ENCODE measurements at regions of chr7 and their contacts with region 1.

Region 1: GRCh38 chr7:151759591-151760042 is 117.3 kb downstream of the PRKAG2 start:
- DNase-seq: no peak
- H3K4me3 ChIP-seq: no peak overlapping the region
- H3K27ac ChIP-seq: no peak overlapping the region
- H3K4me1 ChIP-seq: peaks cover 40 to 52% (median 50%) of the 10 kb centered on the region in 4 donors
- H3K27me3 ChIP-seq: no peaks in the 10 kb centered on the region
- CTCF ChIP-seq: peak; percentile 79 to 90 (median 87)
- EP300 ChIP-seq: no peak
- POLR2A ChIP-seq: no peak

Region 2: GRCh38 chr7:151315038-151315655 is 444.5 kb before region 1 on chr7:
- intact Hi-C with region 1: loop called (anchors 5 kb)
- DNase-seq: peak; percentile 96
- H3K4me3 ChIP-seq: no peak overlapping the region
- H3K27ac ChIP-seq: no peak overlapping the region
- H3K4me1 ChIP-seq: peaks cover 3 to 16% (median 15%) of the 10 kb centered on the region in 4 donors
- H3K27me3 ChIP-seq: no peaks in the 10 kb centered on the region
- CTCF ChIP-seq: peak; percentile 82 to 84 (median 83)
- EP300 ChIP-seq: no peak
- POLR2A ChIP-seq: no peak

Region 3: GRCh38 chr7:151368136-151368571 is 391.5 kb before region 1 on chr7:
- intact Hi-C with region 1: loop called (anchors 5 kb)
- DNase-seq: peak; percentile 96
- H3K4me3 ChIP-seq: no peak overlapping the region
- H3K27ac ChIP-seq: peak overlapping the region; percentile 71 to 85 (median 78)
- H3K4me1 ChIP-seq: peaks cover 12 to 34% (median 33%) of the 10 kb centered on the region in 4 donors
- H3K27me3 ChIP-seq: no peaks in the 10 kb centered on the region
- CTCF ChIP-seq: peak; percentile 94 to 100 (median 97)
- EP300 ChIP-seq: no peak
- POLR2A ChIP-seq: no peak

Region 4: DNA sequence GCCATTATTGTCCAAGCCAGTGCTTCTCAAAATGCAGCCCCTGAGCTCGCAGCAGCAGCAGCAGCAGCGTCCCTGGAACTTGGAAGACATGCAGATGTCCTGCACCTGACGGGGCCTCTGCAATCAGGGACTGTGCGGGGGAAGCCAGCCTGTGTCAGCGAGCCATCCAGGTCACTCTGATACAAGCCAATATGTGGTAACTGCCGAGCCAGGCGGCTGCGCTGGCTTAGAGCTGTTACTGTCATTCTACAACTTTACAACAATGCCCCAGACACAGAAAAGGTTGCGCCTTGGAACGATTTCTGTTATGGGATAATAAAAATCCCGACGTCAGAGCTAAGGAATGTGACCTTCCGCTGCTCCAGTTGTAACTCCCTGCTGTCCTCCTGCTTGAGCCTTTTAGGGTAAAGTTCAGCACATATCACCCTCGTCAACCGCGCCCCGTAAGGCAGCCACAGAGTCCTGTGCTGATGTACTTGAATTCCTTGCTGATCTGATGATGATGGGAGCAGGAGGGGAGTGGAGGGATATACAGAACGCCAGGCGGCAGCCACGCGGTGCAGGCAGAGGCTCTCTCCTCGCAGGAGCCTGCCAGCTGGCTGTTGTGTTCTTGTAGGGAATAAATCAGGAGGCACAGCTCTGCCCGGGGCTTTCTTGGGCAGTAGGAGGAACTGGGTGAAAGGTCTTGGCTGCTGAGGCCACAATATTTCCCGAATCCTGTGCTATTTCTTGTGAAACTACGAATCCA is 299.7 kb before region 1 on chr7:
- intact Hi-C with region 1: loop called (anchors 5 kb)
- DNase-seq: peak; percentile 96
- H3K4me3 ChIP-seq: peak overlapping the region; percentile 27 to 43 (median 30)
- H3K27ac ChIP-seq: peak overlapping the region; percentile 91 to 96 (median 94)
- H3K4me1 ChIP-seq: peaks cover 34 to 38% (median 34%) of the 10 kb centered on the region in 4 donors
- H3K27me3 ChIP-seq: no peaks in the 10 kb centered on the region
- CTCF ChIP-seq: peak; percentile 42 to 55 (median 46)
- EP300 ChIP-seq: peak; percentile 97
- POLR2A ChIP-seq: no peak

Region 5: GRCh38 chr7:151570366-151570915 is 189.2 kb before region 1 on chr7:
- intact Hi-C with region 1: loop called (anchors 5 kb)
- DNase-seq: no peak
- H3K4me3 ChIP-seq: no peak overlapping the region
- H3K27ac ChIP-seq: no peak overlapping the region
- H3K4me1 ChIP-seq: peaks cover 5 to 24% (median 17%) of the 10 kb centered on the region in 4 donors
- H3K27me3 ChIP-seq: no peaks in the 10 kb centered on the region
- CTCF ChIP-seq: peak; percentile 37 to 50 (median 50)
- EP300 ChIP-seq: no peak
- POLR2A ChIP-seq: no peak

Region 6: GRCh38 chr7:151599401-151600227 is 160.0 kb before region 1 on chr7:
- intact Hi-C with region 1: loop called (anchors 10 kb)
- DNase-seq: no peak
- H3K4me3 ChIP-seq: peak overlapping the region in 1 of 4 donors; percentile 21
- H3K27ac ChIP-seq: peak overlapping the region; percentile 88 to 91 (median 89)
- H3K4me1 ChIP-seq: peaks cover 21 to 65% (median 60%) of the 10 kb centered on the region in 4 donors
- H3K27me3 ChIP-seq: no peaks in the 10 kb centered on the region
- CTCF ChIP-seq: peak in 1 of 3 experiments; percentile 25
- EP300 ChIP-seq: no peak
- POLR2A ChIP-seq: no peak

Region 7: DNA sequence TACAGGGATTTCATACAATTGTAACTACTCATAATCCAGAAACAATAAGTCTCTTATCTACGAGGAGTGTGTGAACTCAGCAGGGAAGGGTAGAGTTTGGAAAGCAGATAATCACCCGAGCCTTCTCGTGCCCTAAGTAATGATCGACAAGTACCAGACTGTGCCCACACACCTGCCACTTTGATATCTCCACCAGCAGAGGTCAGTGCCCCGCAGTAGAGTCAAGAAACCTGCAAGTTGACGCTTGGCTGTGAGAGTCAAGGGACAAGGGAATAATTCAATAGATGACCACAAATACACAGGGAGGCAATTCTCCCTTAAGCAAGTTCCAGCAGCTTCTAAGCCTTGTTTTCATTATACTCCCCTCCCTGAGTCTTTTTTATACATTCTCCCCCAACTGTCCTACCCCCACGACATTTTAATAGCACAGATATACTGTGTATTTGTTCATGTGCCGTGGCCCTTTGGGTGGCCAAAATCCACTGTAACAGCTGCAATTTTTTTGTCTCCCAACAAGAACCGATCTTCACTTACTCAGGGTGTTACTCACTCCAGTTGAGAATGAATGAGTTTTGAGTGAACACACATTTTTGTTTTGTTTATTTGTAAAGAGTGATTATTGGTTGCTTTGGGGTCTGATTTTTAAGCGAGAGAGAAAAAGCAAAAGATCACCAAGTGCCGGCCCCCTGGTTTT is 133.0 kb before region 1 on chr7:
- intact Hi-C with region 1: loop called (anchors 5 kb)
- DNase-seq: no peak
- H3K4me3 ChIP-seq: no peak overlapping the region
- H3K27ac ChIP-seq: peak overlapping the region in 1 of 4 donors; percentile 93
- H3K4me1 ChIP-seq: peaks cover 20 to 81% (median 71%) of the 10 kb centered on the region in 4 donors
- H3K27me3 ChIP-seq: no peaks in the 10 kb centered on the region
- CTCF ChIP-seq: peak; percentile 40 to 59 (median 50)
- EP300 ChIP-seq: no peak
- POLR2A ChIP-seq: no peak

Region 8: DNA sequence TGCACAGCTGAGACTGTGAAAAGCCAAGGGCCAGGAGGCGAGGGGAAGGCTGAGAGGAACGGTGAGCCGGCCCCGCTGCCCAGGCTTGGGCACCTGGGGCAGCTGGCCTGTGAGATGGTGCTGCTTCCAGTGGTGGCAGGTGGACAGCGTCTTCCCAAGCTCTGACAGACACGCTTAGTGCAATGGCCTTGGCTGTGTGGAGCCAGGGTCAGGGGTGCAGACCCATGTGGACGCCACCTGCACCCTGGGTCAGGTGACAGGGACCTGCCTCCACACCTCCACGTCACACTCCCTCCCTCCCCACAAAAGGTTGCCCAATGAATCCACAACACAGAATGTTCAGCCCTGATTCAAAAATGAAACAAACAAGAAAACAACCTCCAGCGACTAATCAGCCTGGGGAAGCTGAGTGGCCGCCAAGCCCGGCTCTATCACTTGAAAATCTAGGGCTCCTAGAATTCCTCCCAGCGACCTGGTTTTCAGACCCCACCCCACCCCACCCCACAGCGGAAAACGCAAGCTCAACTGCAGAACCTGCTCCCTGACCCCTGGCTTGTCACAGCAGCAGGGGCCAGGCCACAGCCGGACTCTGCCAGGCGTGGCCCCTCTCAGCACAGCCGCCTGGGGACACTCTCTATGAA is 63.0 kb after region 1 on chr7:
- intact Hi-C with region 1: no loop called
- DNase-seq: no peak
- H3K4me3 ChIP-seq: no peak overlapping the region
- H3K27ac ChIP-seq: peak overlapping the region in 2 of 4 donors; percentile 20 to 37
- H3K4me1 ChIP-seq: peaks cover 3 to 47% (median 31%) of the 10 kb centered on the region in 4 donors
- H3K27me3 ChIP-seq: peaks cover 0 to 3% (median 0%) of the 10 kb centered on the region in 4 donors
- CTCF ChIP-seq: no peak
- EP300 ChIP-seq: no peak
- POLR2A ChIP-seq: no peak